Activated naive CD8-positive, alpha-beta T cell treated with anti-CD3 and anti-CD28 coated beads, Interleukin-2, amount 10 ng/mL, durations not matched to agents 7 days and 5 days (primary cell): ENCODE measurements at regions of chr1 and their contacts with region 1.

Region 1: DNA sequence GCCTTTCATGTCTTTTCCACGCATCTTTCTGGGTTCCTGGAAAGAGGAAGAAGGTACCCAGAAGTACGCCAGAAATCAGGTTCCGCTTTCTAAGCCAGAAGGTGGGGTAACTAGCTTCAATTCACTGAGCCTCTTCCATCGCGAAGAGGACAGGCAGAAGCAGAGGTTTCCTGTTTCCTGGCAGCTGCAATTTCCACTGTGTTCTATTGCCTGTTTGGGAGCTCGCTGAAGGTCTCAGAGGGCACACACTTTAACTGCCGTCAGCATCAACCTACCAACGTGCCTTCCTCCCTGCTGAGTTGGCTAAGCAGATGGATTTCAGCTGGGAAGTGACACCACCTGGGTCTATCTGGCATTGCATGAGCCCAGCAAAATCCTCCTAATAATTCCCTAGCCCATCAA is 10.0 kb downstream of the NCF2 start:
- DNase-seq: peak; percentile 41
- ATAC-seq: peak; percentile 78
- H3K4me3 Mint-ChIP-seq: peak overlapping the region; percentile 71
- H3K27ac Mint-ChIP-seq: peak overlapping the region; percentile 92
- H3K4me1 Mint-ChIP-seq: peaks cover 31% of the 10 kb centered on the region
- H3K27me3 Mint-ChIP-seq: no peaks in the 10 kb centered on the region

Region 2: GRCh38 chr1:183543619-183544204 is 36.6 kb before region 1 on chr1:
- POLR2A ChIA-PET with region 1: no interaction called
- DNase-seq: no peak
- ATAC-seq: peak; percentile 94
- H3K4me3 Mint-ChIP-seq: no peak overlapping the region
- H3K27ac Mint-ChIP-seq: no peak overlapping the region
- H3K4me1 Mint-ChIP-seq: peaks cover 8% of the 10 kb centered on the region
- H3K27me3 Mint-ChIP-seq: no peaks in the 10 kb centered on the region

Region 3: GRCh38 chr1:183590244-183591191 is 10.2 kb after region 1 on chr1 and contains the start of gene NCF2:
- POLR2A ChIA-PET with region 1: interaction called, 28 read pairs
- DNase-seq: peak; percentile 52
- ATAC-seq: peak; percentile 99
- H3K4me3 Mint-ChIP-seq: peak within 1 kb of the TSS; percentile 75
- H3K27ac Mint-ChIP-seq: peak within 1 kb of the TSS; percentile 93
- H3K4me1 Mint-ChIP-seq: peaks cover 24% of the 10 kb centered on the region
- H3K27me3 Mint-ChIP-seq: peaks cover 3% of the 10 kb centered on the region
- total RNA-seq, gene NCF2: 7.5 to 8.0 TPM

Region 4: GRCh38 chr1:183685112-183685713 is 104.9 kb after region 1 on chr1:
- POLR2A ChIA-PET with region 1: no interaction called
- DNase-seq: no peak
- ATAC-seq: no peak
- H3K4me3 Mint-ChIP-seq: no peak overlapping the region
- H3K27ac Mint-ChIP-seq: no peak overlapping the region
- H3K4me1 Mint-ChIP-seq: peaks cover 8% of the 10 kb centered on the region
- H3K27me3 Mint-ChIP-seq: peaks cover 15% of the 10 kb centered on the region